ENCODE measurements at regions of chr14 and their contacts with region 1.

Region 1: DNA sequence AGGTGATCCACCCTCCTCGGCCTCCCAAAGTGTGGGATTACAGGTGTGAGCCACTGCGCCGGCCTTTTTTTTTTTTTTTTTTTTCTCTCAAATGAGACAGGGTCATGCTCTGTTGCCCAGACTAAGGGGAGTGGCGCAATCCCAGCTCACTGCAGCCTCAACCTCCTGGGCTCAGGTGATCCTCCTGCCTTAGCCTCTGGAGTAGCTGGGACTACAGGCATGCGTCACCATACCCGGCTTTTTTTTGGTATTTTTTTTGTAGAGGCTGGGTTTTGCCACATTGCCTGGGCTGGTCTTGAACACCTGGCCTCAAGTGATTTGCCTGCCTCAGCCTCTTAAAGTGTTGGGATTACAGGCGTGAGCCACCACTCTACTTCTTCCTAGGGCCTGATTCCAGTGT is 18.7 kb downstream of the FUT8 start:
- DNase-seq: no peak
- ATAC-seq: no peak
- H3K4me3 ChIP-seq: no peak overlapping the region
- H3K27ac ChIP-seq: no peak overlapping the region
- H3K4me1 ChIP-seq: no peaks in the 10 kb centered on the region
- H3K27me3 ChIP-seq: no peaks in the 10 kb centered on the region
- CTCF ChIP-seq: no peak

Region 2: DNA sequence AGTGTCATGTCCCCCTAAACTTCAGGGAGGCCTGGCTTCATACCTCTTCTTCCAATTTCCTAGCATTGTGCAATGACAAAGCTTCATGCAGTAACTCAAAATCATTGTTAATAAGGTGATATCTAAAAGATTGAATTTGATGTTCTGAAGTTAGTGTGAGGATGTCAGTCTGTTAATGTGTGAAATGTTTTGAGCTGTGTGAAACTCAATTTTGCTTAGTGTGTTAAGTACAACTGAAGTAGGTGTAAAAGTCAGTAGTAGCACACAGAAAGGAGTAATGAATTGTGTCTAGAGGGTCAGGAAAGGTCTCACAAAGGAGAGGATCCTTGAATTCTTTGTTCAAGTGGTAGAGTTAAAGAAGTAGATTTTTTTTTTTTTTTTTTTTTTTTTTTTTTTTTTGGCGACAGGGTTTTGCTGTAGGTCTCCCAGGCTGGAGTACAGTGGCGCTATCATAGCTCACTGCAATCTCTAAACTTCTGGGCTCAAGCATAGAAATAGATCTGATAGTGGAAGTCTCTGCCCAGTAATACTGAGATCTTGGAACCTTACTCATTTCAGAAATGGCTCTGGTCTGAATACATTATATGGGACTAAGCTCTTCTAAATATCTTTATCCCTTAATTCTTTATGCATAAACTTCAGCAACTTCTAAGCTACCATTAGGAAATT is 45.2 kb after region 1 on chr14:
- CTCF ChIA-PET with region 1: no interaction called
- POLR2A ChIA-PET with region 1: interaction called, 12 read pairs
- in situ Hi-C with region 1: no loop called
- intact Hi-C with region 1: no loop called
- DNase-seq: no peak
- ATAC-seq: no peak
- H3K4me3 ChIP-seq: no peak overlapping the region
- H3K27ac ChIP-seq: no peak overlapping the region
- H3K4me1 ChIP-seq: no peaks in the 10 kb centered on the region
- H3K27me3 ChIP-seq: no peaks in the 10 kb centered on the region
- CTCF ChIP-seq: no peak

Region 3: DNA sequence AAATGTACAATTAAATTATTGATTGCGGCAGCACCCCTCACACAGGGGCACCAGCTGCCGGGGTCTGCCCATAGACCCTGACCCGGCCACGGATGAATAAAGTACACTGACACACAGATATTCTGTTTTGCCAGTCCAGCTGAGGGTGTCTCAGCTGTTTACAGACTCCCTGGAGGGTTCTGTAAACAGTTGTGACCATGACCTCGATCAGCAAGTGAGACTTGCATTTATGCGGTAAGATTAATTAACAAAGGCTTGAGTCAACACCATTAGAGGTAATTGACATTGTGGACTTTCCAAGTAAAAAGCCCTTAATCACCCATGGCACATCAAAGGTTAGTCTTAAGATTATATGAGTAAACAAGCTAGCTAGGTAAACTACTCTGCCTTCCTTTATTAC is 75.6 kb after region 1 on chr14:
- CTCF ChIA-PET with region 1: no interaction called
- POLR2A ChIA-PET with region 1: no interaction called
- in situ Hi-C with region 1: no loop called
- intact Hi-C with region 1: no loop called
- DNase-seq: no peak
- ATAC-seq: no peak
- H3K4me3 ChIP-seq: no peak overlapping the region
- H3K27ac ChIP-seq: no peak overlapping the region
- H3K4me1 ChIP-seq: no peaks in the 10 kb centered on the region; the same call in 1 of the 2 replicates
- H3K27me3 ChIP-seq: no peaks in the 10 kb centered on the region
- CTCF ChIP-seq: no peak